ENCODE measurements at regions of chr19 and their contacts with region 1.

Region 1: GRCh38 chr19:2820112-2820702 is 539 bp downstream of the ZNF554 start:
- DNase-seq: no peak
- H3K4me3 ChIP-seq: peak overlapping the region; percentile 60
- H3K4me3 Mint-ChIP-seq: peak overlapping the region; percentile 77
- H3K27ac Mint-ChIP-seq: no peak overlapping the region
- H3K4me1 ChIP-seq: no peaks in the 10 kb centered on the region
- H3K4me1 Mint-ChIP-seq: no peaks in the 10 kb centered on the region
- H3K27me3 ChIP-seq: no peaks in the 10 kb centered on the region
- H3K27me3 Mint-ChIP-seq: no peaks in the 10 kb centered on the region
- CTCF ChIP-seq: no peak

Region 2: GRCh38 chr19:2798733-2799132 is 21.5 kb before region 1 on chr19:
- CTCF ChIA-PET with region 1: no interaction called
- POLR2A ChIA-PET with region 1: no interaction called
- intact Hi-C with region 1: no loop called
- DNase-seq: no peak
- H3K4me3 ChIP-seq: no peak overlapping the region
- H3K4me3 Mint-ChIP-seq: no peak overlapping the region
- H3K27ac Mint-ChIP-seq: no peak overlapping the region
- H3K4me1 ChIP-seq: no peaks in the 10 kb centered on the region
- H3K4me1 Mint-ChIP-seq: no peaks in the 10 kb centered on the region
- H3K27me3 ChIP-seq: no peaks in the 10 kb centered on the region
- H3K27me3 Mint-ChIP-seq: no peaks in the 10 kb centered on the region
- CTCF ChIP-seq: no peak

Region 3: DNA sequence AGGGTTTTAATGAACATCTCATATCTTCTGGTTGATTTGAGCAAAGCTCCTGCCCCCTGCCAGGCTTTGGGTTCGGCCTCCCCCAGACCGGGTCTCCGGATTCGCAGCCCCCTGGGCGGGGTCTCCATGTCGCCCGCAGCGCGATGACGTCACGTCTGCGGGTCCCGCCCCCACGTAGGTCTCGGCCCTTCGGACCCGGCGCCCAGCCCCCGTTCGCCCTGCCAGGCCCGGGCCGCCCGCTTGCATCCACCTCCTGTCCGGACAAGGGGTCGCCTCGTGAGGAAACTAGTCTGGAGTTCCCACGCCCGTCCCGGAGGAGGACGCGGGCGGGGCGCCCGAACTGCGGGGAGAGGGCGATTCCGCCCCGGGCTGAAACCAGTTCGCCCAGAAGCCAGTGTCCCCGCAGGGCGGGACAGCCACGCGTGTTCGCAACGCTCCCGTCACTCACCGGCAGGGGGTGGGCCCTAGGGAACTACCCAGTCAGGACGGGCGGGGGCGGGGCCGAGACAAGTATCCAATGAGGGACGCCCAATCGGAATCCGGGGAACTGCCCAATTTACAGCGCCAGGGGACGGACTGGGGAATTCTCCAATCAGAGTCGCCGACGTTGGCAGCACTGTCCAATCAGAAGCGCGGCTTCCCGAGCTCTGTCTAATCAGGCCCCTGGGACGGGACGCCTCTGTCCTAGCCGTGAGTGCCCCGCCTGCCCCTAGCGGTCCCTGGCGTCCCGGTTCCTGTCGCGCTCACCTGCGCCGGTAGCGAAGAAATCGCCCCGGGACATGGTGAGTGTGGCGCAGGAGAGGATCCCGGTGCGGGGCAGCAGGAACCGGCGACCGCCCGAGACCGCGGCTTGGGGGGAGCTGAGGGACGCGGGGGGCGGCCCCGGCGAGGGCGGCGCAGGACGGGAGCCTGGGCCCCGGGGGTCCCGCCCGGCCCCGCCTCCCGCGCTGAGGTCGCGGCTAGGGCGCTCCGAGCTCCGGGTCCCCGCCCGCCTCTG is 20.9 kb after region 1 on chr19 and contains the start of gene ZNF555:
- CTCF ChIA-PET with region 1: interaction called, 3 read pairs
- POLR2A ChIA-PET with region 1: no interaction called
- intact Hi-C with region 1: loop called (anchors 1 kb)
- DNase-seq: peak; percentile 98 to 99
- H3K4me3 ChIP-seq: peak within 1 kb of the TSS; percentile 90
- H3K4me3 Mint-ChIP-seq: peak within 1 kb of the TSS; percentile 85
- H3K27ac Mint-ChIP-seq: peak within 1 kb of the TSS; percentile 93
- H3K4me1 ChIP-seq: no peaks in the 10 kb centered on the region
- H3K4me1 Mint-ChIP-seq: peaks cover 6% of the 10 kb centered on the region
- H3K27me3 ChIP-seq: no peaks in the 10 kb centered on the region
- H3K27me3 Mint-ChIP-seq: no peaks in the 10 kb centered on the region
- CTCF ChIP-seq: peak; percentile 56 to 61
- total RNA-seq, gene ZNF555: 4.7 and 6.2 TPM in 2 replicates